ENCODE measurements at regions of chr16 and their contacts with region 1.

Region 1: DNA sequence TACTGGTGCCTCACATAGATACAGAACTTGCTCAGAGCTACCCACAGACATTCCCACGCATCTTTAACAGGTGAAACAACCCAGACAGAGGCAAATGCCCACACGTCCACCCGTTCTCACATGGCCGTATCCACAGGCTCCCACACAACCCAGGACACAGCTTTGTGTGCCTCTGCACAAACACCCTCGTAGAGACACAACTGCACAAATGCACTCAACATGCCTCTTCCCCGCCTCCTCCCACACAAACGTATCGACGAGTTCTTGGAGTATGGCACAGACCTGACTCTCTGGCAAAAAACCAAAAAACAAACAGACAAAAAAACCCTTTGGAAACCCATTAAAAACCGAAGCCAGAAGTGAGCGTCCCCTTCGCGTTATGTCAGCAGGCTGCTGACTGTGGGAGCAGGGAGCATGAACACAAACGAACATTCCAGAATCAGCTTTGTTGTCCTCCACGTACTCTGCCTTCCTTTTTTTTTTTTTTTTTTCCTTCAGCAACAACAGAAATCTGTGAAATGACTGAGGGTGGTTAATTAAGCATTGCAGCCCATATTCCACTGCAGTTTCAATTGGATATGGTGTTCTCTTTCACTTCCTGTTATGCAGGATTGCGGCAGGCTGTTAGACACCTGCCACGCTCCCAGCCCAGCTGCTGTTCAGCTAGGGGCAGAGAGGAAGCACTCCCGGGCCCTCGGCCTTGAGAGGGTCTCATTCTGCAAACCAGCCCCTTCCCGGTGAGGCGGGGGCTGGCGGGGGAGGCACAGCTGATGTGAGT is 313.7 kb downstream of the MAF start:
- DNase-seq: peak in 17 of 35 experiments; percentile 6 to 44 (median 17)
- ATAC-seq: peak; percentile 71 to 79 (median 74)
- H3K4me3 ChIP-seq: peak overlapping the region in 1 of 2 donors; percentile 38
- H3K4me3 Mint-ChIP-seq: peak overlapping the region; percentile 58 to 81 (median 63)
- H3K27ac ChIP-seq: peak overlapping the region; percentile 16
- H3K27ac Mint-ChIP-seq: peak overlapping the region; percentile 84
- H3K4me1 ChIP-seq: peaks cover 4 to 41% of the 10 kb centered on the region in 2 experiments
- H3K4me1 Mint-ChIP-seq: peaks cover 50 to 54% (median 52%) of the 10 kb centered on the region in 3 donors
- H3K27me3 ChIP-seq: no peaks in the 10 kb centered on the region
- H3K27me3 Mint-ChIP-seq: peaks cover 0 to 13% of the 10 kb centered on the region in 2 donors

Region 2: GRCh38 chr16:77679901-77680300 is 1606.9 kb before region 1 on chr16:
- CTCF ChIA-PET with region 1: no interaction called
- POLR2A ChIA-PET with region 1: no interaction called
- DNase-seq: peak in 1 of 35 experiments; percentile 13
- ATAC-seq: no peak
- H3K4me3 ChIP-seq: no peak overlapping the region
- H3K4me3 Mint-ChIP-seq: no peak overlapping the region
- H3K27ac ChIP-seq: no peak overlapping the region
- H3K27ac Mint-ChIP-seq: no peak overlapping the region
- H3K4me1 ChIP-seq: no peaks in the 10 kb centered on the region
- H3K4me1 Mint-ChIP-seq: no peaks in the 10 kb centered on the region
- H3K27me3 ChIP-seq: peaks cover 0 to 7% of the 10 kb centered on the region in 2 experiments
- H3K27me3 Mint-ChIP-seq: peaks cover 0 to 3% of the 10 kb centered on the region in 2 donors

Region 3: GRCh38 chr16:79347277-79347676 is 60.4 kb after region 1 on chr16:
- CTCF ChIA-PET with region 1: no interaction called
- POLR2A ChIA-PET with region 1: interaction called in 1 of 2 experiments, 10 read pairs
- DNase-seq: no peak
- ATAC-seq: no peak
- H3K4me3 ChIP-seq: no peak overlapping the region
- H3K4me3 Mint-ChIP-seq: no peak overlapping the region
- H3K27ac ChIP-seq: no peak overlapping the region
- H3K27ac Mint-ChIP-seq: no peak overlapping the region
- H3K4me1 ChIP-seq: no peaks in the 10 kb centered on the region
- H3K4me1 Mint-ChIP-seq: peaks cover 0 to 5% (median 5%) of the 10 kb centered on the region in 3 donors
- H3K27me3 ChIP-seq: no peaks in the 10 kb centered on the region
- H3K27me3 Mint-ChIP-seq: peaks cover 0 to 4% of the 10 kb centered on the region in 2 donors